Calu3 (cell line): ENCODE measurements at regions of chr5 and their contacts with region 1.

Region 1: GRCh38 chr5:72847989-72848473 is 31.6 kb downstream of the TNPO1 start:
- DNase-seq: peak; percentile 94
- H3K4me3 Mint-ChIP-seq: peak overlapping the region; percentile 100
- H3K27ac Mint-ChIP-seq: peak overlapping the region; percentile 94
- H3K4me1 Mint-ChIP-seq: peaks cover 39% of the 10 kb centered on the region
- H3K27me3 Mint-ChIP-seq: no peaks in the 10 kb centered on the region
- CTCF ChIP-seq: no peak

Region 2: GRCh38 chr5:72366324-72366976 is 481.6 kb before region 1 on chr5:
- CTCF ChIA-PET with region 1: no interaction called
- intact Hi-C with region 1: loop called (anchors 10 kb)
- DNase-seq: peak; percentile 67
- H3K4me3 Mint-ChIP-seq: no peak overlapping the region
- H3K27ac Mint-ChIP-seq: no peak overlapping the region
- H3K4me1 Mint-ChIP-seq: peaks cover 9% of the 10 kb centered on the region
- H3K27me3 Mint-ChIP-seq: no peaks in the 10 kb centered on the region
- CTCF ChIP-seq: no peak

Region 3: GRCh38 chr5:72417333-72418207 is 430.5 kb before region 1 on chr5:
- CTCF ChIA-PET with region 1: no interaction called
- intact Hi-C with region 1: no loop called
- DNase-seq: no peak
- H3K4me3 Mint-ChIP-seq: no peak overlapping the region
- H3K27ac Mint-ChIP-seq: no peak overlapping the region
- H3K4me1 Mint-ChIP-seq: no peaks in the 10 kb centered on the region
- H3K27me3 Mint-ChIP-seq: peaks cover 18% of the 10 kb centered on the region
- CTCF ChIP-seq: no peak

Region 4: DNA sequence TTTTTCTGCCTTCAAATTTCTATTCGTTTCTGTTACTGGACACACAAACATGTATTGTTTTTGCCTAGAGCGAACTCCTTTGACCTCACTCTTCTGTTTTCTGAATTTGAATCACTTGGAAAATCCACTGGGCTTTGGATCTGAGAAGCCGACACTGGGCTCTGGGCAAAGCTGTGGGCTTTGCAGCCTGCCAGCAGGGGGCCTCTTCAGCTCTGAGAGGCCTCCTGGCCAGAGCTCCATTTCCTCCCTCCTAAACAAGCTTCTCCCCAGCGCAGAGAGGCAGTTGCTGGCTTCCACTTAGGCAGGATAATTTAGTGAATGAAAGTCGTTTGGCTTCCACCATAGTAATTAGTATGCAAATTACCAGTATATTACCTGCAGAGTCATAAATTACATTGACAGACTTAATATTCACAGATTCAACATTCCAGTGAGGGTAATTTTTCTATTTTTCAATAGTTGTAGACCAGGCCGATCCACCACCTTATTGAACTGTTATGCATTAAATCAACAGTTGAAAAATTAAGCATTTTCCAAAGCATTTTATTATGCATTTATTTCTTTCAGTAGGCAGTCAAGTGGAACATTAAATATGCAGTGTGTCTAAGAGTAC is 236.8 kb before region 1 on chr5:
- CTCF ChIA-PET with region 1: interaction called, 9 read pairs
- intact Hi-C with region 1: loop called (anchors 10 kb)
- DNase-seq: peak; percentile 74
- H3K4me3 Mint-ChIP-seq: no peak overlapping the region
- H3K27ac Mint-ChIP-seq: no peak overlapping the region
- H3K4me1 Mint-ChIP-seq: no peaks in the 10 kb centered on the region
- H3K27me3 Mint-ChIP-seq: peaks cover 17% of the 10 kb centered on the region
- CTCF ChIP-seq: peak; percentile 91